Activated naive CD4-positive, alpha-beta T cell treated with anti-CD3 and anti-CD28 coated beads for 36 hours (primary cell): ENCODE measurements at regions of chr20 and their contacts with region 1.

Region 1: GRCh38 chr20:17682103-17682888 is at the start of gene RRBP1:
- DNase-seq: peak; percentile 97
- H3K4me3 Mint-ChIP-seq: peak within 1 kb of the TSS; percentile 81
- H3K27ac Mint-ChIP-seq: peak within 1 kb of the TSS; percentile 47
- H3K4me1 Mint-ChIP-seq: peaks cover 15% of the 10 kb centered on the region
- H3K27me3 Mint-ChIP-seq: peaks cover 19% of the 10 kb centered on the region
- total RNA-seq, gene RRBP1: 19.6 to 20.0 TPM

Region 2: GRCh38 chr20:16573001-16573965 is 1109.0 kb before region 1 on chr20 and contains the start of gene KIF16B:
- CTCF ChIA-PET with region 1: no interaction called
- intact Hi-C with region 1: loop called (anchors 10 kb)
- DNase-seq: peak; percentile 89
- H3K4me3 Mint-ChIP-seq: peak within 1 kb of the TSS; percentile 88
- H3K27ac Mint-ChIP-seq: peak within 1 kb of the TSS; percentile 79
- H3K4me1 Mint-ChIP-seq: peaks cover 35% of the 10 kb centered on the region
- H3K27me3 Mint-ChIP-seq: no peaks in the 10 kb centered on the region
- total RNA-seq, gene KIF16B: 5.1 to 5.6 TPM

Region 3: DNA sequence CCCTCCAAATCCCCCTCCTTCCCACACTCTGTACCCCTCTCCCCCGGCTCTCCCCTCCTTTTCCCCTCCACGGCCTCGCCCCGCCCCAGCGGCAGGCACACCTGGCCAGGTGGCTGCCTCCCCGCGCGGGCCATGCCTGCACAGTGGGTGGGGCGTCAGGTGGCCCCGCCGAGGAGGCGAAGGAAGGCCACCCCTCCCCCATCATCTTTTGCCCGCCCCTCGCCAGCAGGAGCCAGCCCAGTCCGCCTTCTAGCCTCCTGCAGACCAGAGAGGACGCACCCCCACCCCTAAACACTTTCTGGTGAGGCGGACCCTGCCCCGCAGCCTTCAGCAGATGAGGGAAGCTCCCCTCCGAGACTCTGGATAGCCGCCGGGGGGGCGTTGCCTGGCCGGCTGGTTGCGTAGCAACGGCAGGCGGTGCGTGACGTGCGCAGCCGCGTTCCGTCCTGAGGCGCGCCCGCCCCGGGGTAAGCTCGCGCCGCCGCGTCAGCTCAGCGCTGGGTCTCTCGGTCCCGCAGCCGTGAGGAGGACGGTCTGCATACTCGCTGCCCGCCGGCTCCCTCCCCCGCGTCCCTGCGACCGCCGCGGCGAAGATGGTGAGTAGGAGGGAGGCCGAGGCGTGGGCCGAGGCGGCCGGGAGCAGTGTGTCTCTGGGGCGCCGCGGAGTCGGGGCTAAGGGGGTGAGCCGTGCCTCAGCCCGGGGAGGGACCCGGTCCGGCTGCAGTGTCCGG is 112.5 kb before region 1 on chr20 and contains the start of gene DSTN:
- CTCF ChIA-PET with region 1: interaction called, 5 read pairs
- intact Hi-C with region 1: loop called (anchors 1 kb)
- DNase-seq: peak; percentile 84
- H3K4me3 Mint-ChIP-seq: peak within 1 kb of the TSS; percentile 91
- H3K27ac Mint-ChIP-seq: peak within 1 kb of the TSS; percentile 78
- H3K4me1 Mint-ChIP-seq: peaks cover 25% of the 10 kb centered on the region
- H3K27me3 Mint-ChIP-seq: no peaks in the 10 kb centered on the region
- total RNA-seq, gene DSTN: 68.9 to 69.7 TPM

Region 4: GRCh38 chr20:17725094-17725835 is 43.0 kb after region 1 on chr20:
- CTCF ChIA-PET with region 1: no interaction called
- intact Hi-C with region 1: no loop called
- DNase-seq: no peak
- H3K4me3 Mint-ChIP-seq: no peak overlapping the region
- H3K27ac Mint-ChIP-seq: no peak overlapping the region
- H3K4me1 Mint-ChIP-seq: no peaks in the 10 kb centered on the region
- H3K27me3 Mint-ChIP-seq: peaks cover 4% of the 10 kb centered on the region

Region 5: DNA sequence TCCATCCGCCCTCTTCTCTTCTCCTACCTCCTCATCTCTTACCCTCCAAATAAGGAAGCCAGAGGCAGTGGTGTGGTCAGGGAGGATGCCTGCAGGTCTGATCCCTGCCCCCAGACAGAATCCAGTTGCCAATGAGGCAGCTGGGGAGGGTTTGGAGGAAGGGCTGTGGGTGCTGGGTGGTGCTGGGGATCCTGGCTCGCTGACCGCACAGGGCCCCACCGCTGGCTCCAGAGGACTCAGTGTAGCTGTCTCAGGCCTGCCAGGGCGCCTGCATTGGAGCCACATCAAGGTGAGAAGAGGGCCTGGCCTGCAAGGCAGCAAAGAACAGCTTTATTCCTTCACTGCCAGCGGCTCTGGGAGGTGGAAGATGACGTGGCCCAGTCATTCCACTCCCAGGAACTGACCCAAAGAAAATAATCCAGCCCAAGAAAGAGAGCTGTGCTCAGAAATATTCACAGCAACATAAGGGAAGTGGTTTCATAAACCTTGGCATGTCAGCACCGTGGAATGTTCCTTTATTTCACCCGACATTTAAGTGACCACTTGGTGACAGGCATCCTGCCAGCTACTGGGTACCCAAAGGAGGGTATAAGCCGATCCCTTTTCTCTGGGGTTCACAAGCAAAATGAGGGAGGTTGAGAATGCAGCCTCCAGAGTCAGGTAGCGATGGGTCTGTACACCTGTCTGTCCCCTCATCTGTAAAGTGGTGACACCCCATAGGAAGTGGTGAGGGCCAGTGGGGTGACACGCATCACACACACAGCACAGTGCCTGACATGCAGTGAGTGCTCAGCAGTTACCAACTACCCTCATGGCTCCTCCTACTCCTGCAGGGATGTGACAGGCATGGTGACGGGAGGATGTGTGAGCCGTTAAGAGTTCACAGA is 161.2 kb after region 1 on chr20:
- CTCF ChIA-PET with region 1: no interaction called
- intact Hi-C with region 1: no loop called
- DNase-seq: peak; percentile 11
- H3K4me3 Mint-ChIP-seq: no peak overlapping the region
- H3K27ac Mint-ChIP-seq: no peak overlapping the region
- H3K4me1 Mint-ChIP-seq: no peaks in the 10 kb centered on the region
- H3K27me3 Mint-ChIP-seq: no peaks in the 10 kb centered on the region

Region 6: DNA sequence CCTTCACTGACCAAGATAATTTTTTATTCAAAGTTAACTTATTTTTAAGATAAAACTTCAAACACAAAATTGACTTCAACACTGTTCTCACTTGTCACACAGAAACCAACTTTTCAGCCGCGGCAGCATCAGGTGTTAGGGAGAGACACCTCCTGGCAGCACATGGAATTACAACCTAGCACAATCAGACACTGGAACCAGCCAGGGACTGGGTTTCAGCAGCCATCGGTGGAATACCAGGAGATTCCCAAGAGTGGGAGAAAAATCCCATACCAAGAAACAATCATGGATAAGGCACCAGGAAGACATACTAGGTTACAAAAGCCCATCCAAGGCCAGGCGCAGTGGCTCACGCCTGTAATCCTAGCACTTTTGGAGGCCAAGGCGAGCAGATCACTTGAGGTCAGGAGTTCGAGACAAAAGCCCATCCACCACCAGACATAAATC is 216.3 kb after region 1 on chr20:
- CTCF ChIA-PET with region 1: interaction called, 14 read pairs
- intact Hi-C with region 1: loop called (anchors 1 kb)
- DNase-seq: peak; percentile 78
- H3K4me3 Mint-ChIP-seq: no peak overlapping the region
- H3K27ac Mint-ChIP-seq: no peak overlapping the region
- H3K4me1 Mint-ChIP-seq: peaks cover 12% of the 10 kb centered on the region
- H3K27me3 Mint-ChIP-seq: peaks cover 25% of the 10 kb centered on the region

Region 7: GRCh38 chr20:18287915-18288748 is 605.8 kb after region 1 on chr20 and contains the start of gene ZNF133:
- CTCF ChIA-PET with region 1: interaction called, 3 read pairs
- intact Hi-C with region 1: loop called (anchors 1 kb)
- DNase-seq: peak; percentile 97
- H3K4me3 Mint-ChIP-seq: peak within 1 kb of the TSS; percentile 95
- H3K27ac Mint-ChIP-seq: peak within 1 kb of the TSS; percentile 98
- H3K4me1 Mint-ChIP-seq: peaks cover 12% of the 10 kb centered on the region
- H3K27me3 Mint-ChIP-seq: peaks cover 12% of the 10 kb centered on the region
- total RNA-seq, gene ZNF133: 5.2 to 5.3 TPM

Region 8: DNA sequence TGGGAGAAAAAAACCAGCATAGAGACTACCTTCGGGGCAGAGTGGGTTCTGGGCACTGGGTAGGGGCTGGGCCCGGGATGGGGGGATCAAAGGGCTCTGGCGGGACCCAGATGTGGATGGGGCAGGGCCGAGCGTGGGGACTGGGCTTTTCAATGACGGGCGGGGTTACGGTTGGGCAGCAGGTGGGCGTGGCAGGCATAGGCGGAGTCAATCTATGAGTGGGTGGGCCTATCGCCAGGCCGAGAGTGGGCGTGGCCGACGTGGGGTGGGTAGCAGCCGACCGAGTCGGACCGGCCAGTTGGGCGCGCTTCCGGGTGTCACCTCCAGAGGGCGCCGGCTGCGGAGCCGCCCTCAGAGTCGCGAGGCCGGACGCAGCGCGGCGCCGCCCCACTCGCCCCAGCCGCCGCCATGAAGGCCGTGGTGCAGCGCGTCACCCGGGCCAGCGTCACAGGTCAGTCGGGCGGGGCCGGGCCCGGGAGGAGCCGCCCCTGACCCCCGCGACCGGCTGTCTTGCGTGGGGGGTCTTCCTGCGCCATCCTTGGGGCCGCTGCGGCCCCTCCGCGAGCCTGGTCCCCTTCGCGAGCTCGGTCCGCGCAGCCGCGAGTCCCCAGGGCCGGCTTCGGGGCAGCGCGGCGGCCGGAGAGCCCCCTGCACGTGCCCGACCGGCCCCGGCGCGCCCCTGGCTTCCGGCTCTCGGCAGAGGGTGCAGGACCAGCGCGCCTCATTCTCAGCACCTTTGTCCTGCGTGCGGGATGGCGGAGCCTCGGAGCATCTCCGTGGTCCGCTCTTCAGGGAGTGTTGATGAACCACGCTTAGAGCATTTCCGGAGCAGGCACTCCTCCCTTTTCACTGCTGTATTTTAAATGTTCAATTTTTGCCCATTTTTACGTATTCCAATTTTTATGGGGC is 905.6 kb after region 1 on chr20 and contains the start of gene DTD1:
- CTCF ChIA-PET with region 1: no interaction called
- intact Hi-C with region 1: loop called (anchors 5 kb)
- DNase-seq: peak; percentile 89
- H3K4me3 Mint-ChIP-seq: peak within 1 kb of the TSS; percentile 87
- H3K27ac Mint-ChIP-seq: peak within 1 kb of the TSS; percentile 59
- H3K4me1 Mint-ChIP-seq: peaks cover 23% of the 10 kb centered on the region
- H3K27me3 Mint-ChIP-seq: no peaks in the 10 kb centered on the region
- total RNA-seq, gene DTD1: 46.4 to 47.1 TPM